ENCODE measurements at regions of chr11 and their contacts with region 1.

Region 1: GRCh38 chr11:125345421-125346178 is 150.5 kb downstream of the FEZ1 start:
- DNase-seq: peak; percentile 69
- ATAC-seq: peak; percentile 61
- H3K4me3 Mint-ChIP-seq: no peak overlapping the region
- H3K27ac Mint-ChIP-seq: no peak overlapping the region
- H3K4me1 Mint-ChIP-seq: no peaks in the 10 kb centered on the region
- H3K27me3 Mint-ChIP-seq: peaks cover 5% of the 10 kb centered on the region
- CTCF ChIP-seq: peak; percentile 85

Region 2: GRCh38 chr11:124961972-124962609 is 383.5 kb before region 1 on chr11:
- CTCF ChIA-PET with region 1: interaction called, 5 read pairs
- POLR2A ChIA-PET with region 1: no interaction called
- intact Hi-C with region 1: loop called (anchors 5 kb)
- DNase-seq: no peak
- ATAC-seq: peak; percentile 93
- H3K4me3 Mint-ChIP-seq: no peak overlapping the region
- H3K27ac Mint-ChIP-seq: no peak overlapping the region
- H3K4me1 Mint-ChIP-seq: no peaks in the 10 kb centered on the region
- H3K27me3 Mint-ChIP-seq: no peaks in the 10 kb centered on the region
- CTCF ChIP-seq: peak; percentile 62

Region 3: GRCh38 chr11:125164422-125165110 is 181.0 kb before region 1 on chr11 and contains the start of gene PKNOX2:
- CTCF ChIA-PET with region 1: interaction called, 5 read pairs
- POLR2A ChIA-PET with region 1: no interaction called
- intact Hi-C with region 1: loop called (anchors 10 kb)
- DNase-seq: peak; percentile 71
- ATAC-seq: peak; percentile 86
- H3K4me3 Mint-ChIP-seq: peak within 1 kb of the TSS; percentile 77
- H3K27ac Mint-ChIP-seq: no peak within 1 kb of the TSS
- H3K4me1 Mint-ChIP-seq: peaks cover 21% of the 10 kb centered on the region
- H3K27me3 Mint-ChIP-seq: peaks cover 56% of the 10 kb centered on the region
- CTCF ChIP-seq: peak; percentile 50
- total RNA-seq, gene PKNOX2: not detected

Region 4: DNA sequence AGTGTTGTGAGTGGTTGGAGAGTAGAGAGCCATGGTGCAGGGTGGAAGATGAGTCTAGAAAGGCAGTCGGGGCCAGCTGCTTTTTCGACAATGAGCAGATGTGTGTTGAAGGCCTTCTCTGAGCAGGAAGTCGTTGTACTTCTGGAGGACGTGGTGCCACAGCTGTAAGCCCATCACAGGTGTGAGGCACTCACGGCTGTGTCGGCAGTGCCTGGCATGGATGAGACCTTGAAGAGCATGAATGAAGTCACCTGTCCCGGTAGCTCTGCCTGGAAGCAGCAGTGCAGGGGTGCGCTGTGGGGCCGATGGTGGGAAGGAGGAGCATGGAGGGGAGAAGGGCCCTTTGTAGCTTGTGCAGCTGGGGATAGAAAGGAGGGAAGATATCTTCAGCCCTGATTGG is 15.8 kb before region 1 on chr11:
- CTCF ChIA-PET with region 1: interaction called, 23 read pairs
- POLR2A ChIA-PET with region 1: interaction called, 3 read pairs
- intact Hi-C with region 1: no loop called
- DNase-seq: no peak
- ATAC-seq: no peak
- H3K4me3 Mint-ChIP-seq: no peak overlapping the region
- H3K27ac Mint-ChIP-seq: no peak overlapping the region
- H3K4me1 Mint-ChIP-seq: no peaks in the 10 kb centered on the region
- H3K27me3 Mint-ChIP-seq: peaks cover 19% of the 10 kb centered on the region
- CTCF ChIP-seq: no peak

Region 5: GRCh38 chr11:125358254-125358840 is 12.7 kb after region 1 on chr11:
- CTCF ChIA-PET with region 1: interaction called, 34 read pairs
- POLR2A ChIA-PET with region 1: no interaction called
- intact Hi-C with region 1: no loop called
- DNase-seq: no peak
- ATAC-seq: no peak
- H3K4me3 Mint-ChIP-seq: no peak overlapping the region
- H3K27ac Mint-ChIP-seq: no peak overlapping the region
- H3K4me1 Mint-ChIP-seq: no peaks in the 10 kb centered on the region
- H3K27me3 Mint-ChIP-seq: no peaks in the 10 kb centered on the region
- CTCF ChIP-seq: no peak

Region 6: GRCh38 chr11:125364121-125364826 is 18.7 kb after region 1 on chr11:
- CTCF ChIA-PET with region 1: interaction called, 15 read pairs
- POLR2A ChIA-PET with region 1: no interaction called
- intact Hi-C with region 1: no loop called
- DNase-seq: no peak
- ATAC-seq: no peak
- H3K4me3 Mint-ChIP-seq: no peak overlapping the region
- H3K27ac Mint-ChIP-seq: no peak overlapping the region
- H3K4me1 Mint-ChIP-seq: no peaks in the 10 kb centered on the region
- H3K27me3 Mint-ChIP-seq: no peaks in the 10 kb centered on the region
- CTCF ChIP-seq: no peak

Region 7: DNA sequence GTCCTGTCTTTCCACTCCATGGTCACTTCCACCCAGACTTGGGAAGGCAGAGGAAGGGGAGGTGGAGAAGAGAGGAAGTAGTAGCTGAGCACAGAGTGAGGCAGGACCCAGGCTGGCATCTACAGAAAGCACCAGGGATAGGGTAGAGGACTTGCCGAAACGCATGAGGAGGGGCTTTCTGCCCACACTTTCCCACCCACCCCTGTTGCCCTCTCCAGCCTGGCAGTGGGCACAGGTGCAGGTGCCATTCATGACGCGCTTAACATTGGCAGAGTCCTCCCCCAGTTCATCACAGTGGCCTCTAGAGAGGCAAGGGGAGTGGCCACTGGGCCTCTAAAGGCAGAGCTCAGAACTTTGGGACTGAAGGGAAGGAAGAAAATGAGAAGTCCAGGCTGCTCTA is 68.5 kb after region 1 on chr11:
- CTCF ChIA-PET with region 1: no interaction called
- POLR2A ChIA-PET with region 1: no interaction called
- intact Hi-C with region 1: no loop called
- DNase-seq: no peak
- ATAC-seq: no peak
- H3K4me3 Mint-ChIP-seq: no peak overlapping the region
- H3K27ac Mint-ChIP-seq: no peak overlapping the region
- H3K4me1 Mint-ChIP-seq: no peaks in the 10 kb centered on the region
- H3K27me3 Mint-ChIP-seq: peaks cover 7% of the 10 kb centered on the region
- CTCF ChIP-seq: no peak

Region 8: DNA sequence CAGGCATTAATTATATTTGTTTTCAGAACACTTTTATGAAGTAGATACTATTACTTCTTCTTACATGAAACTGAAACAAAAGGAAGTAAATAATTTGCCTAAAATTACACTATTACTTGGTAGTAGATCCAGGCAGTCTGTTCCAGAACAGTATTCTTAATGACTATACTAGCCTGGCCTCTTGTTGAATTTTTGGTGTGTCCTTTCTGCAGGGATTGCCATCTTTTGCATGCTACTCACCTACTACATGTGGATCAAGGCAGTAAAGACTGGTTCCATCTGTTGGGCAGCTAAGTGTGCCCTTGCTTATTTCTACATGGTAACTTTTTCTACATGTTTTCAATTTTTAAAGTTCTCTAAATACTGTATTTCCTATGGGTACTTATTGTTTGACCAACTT is 259.8 kb after region 1 on chr11:
- CTCF ChIA-PET with region 1: no interaction called
- POLR2A ChIA-PET with region 1: no interaction called
- intact Hi-C with region 1: no loop called
- DNase-seq: no peak
- ATAC-seq: no peak
- H3K4me3 Mint-ChIP-seq: no peak overlapping the region
- H3K27ac Mint-ChIP-seq: no peak overlapping the region
- H3K4me1 Mint-ChIP-seq: no peaks in the 10 kb centered on the region
- H3K27me3 Mint-ChIP-seq: no peaks in the 10 kb centered on the region
- CTCF ChIP-seq: no peak